GM10248 (cell line): ENCODE measurements at regions of chr2 and their contacts with region 1.

Region 1: DNA sequence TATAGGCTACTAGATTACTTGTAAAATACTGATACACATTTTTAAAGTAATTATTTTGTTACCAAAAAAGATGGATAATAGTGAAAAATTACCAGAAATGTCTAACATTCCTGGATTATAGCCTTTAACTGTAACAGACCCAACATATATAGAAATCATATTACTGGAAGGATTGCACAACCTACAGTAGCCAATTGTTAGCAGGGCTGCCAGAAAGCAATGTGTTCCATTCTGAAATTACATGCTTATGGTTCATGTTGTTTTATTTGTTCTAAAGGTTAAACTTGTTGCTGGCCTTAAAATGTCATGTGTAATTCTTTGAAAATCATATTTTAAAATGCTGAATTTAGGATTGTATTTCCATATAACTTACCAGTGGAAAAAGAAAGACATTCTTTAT is 793.6 kb upstream of the ACVR2A start:
- DNase-seq: no peak
- CTCF ChIP-seq: no peak

Region 2: DNA sequence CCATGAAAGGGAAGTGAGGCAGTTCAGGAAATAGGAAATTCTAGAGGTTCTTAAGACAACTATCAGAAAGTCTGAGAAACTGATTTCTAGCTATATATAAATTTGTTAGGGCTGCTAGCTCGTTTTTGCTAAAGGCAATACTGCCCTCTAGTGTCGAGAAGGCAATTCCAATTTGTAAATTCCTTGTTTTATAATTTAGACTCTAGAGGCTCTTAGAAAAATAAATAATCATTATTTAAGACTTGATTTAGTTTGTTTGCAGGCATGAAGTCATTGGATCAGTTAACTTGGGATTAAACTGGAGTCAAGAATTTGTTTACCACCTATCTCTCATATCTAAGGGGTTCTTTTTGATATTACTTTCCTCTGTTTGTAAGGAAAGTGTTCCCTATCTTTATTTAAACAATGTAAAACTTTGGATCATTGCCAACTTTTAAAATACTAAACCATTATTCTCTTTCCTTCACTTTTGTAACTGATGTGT is 859.8 kb after region 1 on chr2:
- CTCF ChIA-PET with region 1: interaction called, 33 read pairs
- POLR2A ChIA-PET with region 1: no interaction called
- DNase-seq: no peak
- CTCF ChIP-seq: peak; percentile 50